ENCODE measurements at regions of chr7 and their contacts with region 1.

Region 1: DNA sequence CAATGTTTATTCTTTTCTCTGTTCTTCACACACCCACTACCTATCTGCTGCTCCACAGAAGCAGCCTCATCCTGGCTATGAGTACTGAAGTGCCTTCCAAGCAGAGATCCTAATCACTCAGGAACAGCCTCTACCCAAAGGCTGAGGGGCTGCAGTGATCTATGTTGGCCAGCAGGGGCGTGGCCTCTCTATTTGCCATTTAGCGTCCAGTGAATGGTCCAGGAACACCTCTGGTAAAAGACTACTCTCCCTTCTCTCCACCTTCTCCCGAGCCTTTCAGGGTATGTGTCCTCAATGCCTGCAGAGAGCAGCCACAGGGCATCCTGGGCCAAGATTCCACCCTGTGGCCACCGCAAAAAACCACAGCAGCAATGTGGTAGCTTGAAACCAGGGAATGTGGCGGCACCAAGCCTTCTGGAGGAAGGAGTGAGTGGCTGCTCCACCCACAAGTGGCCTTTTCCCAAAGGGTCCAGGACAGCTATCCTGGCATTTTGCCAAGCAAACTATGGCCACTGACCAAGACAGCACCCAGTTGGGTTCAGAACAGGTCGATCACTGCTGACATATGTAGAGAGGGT is 70.9 kb downstream of the SYPL1 start:
- DNase-seq: peak; percentile 35
- H3K4me3 ChIP-seq: no peak overlapping the region
- H3K27ac ChIP-seq: no peak overlapping the region
- H3K4me1 ChIP-seq: no peaks in the 10 kb centered on the region
- H3K27me3 ChIP-seq: peaks cover 4 to 8% of the 10 kb centered on the region in 2 experiments
- CTCF ChIP-seq: peak; percentile 79 to 89
- POLR2A ChIP-seq: no peak

Region 2: GRCh38 chr7:105399043-105399725 is 642.0 kb before region 1 on chr7:
- CTCF ChIA-PET with region 1: no interaction called
- POLR2A ChIA-PET with region 1: no interaction called
- dilution Hi-C with region 1: no loop called
- intact Hi-C with region 1: loop called (anchors 10 kb)
- DNase-seq: peak; percentile 75
- H3K4me3 ChIP-seq: no peak overlapping the region
- H3K27ac ChIP-seq: no peak overlapping the region
- H3K4me1 ChIP-seq: peaks cover 12% of the 10 kb centered on the region
- H3K27me3 ChIP-seq: no peaks in the 10 kb centered on the region
- CTCF ChIP-seq: peak in 1 of 2 donors; percentile 29
- POLR2A ChIP-seq: no peak

Region 3: DNA sequence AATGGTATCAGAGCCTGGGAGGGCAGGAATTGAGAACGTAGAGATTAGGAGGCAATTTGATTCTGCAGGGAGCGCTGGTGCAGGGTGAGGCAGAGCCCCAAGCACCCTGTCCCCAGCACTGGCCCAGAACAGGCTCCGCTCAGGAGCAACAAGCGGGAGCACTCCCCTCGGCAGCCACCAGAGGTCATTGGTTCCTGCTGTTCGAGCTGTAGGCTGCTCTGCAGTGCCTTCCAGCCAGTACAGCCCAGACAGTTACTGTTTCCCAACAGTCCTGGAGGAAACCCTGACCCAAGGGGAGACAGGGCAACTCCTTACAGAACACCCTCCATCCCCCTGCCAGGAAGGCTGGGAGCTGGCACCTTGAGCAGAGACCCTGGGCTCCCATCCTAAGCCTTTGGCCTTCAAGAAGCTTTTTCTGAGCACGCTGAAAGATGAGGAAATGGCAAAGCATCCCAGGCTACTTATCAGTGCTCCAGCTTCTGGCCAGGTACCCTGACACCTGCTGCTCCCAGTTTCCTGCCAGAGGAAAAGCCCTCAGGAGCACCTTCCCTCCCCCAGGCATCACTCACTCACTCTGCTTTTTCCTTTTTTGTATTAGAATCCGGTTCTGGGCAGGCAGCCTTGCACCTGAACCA is 388.8 kb before region 1 on chr7:
- CTCF ChIA-PET with region 1: interaction called, 72 read pairs
- POLR2A ChIA-PET with region 1: no interaction called
- dilution Hi-C with region 1: no loop called
- intact Hi-C with region 1: loop called (anchors 1 kb)
- DNase-seq: peak; percentile 67
- H3K4me3 ChIP-seq: no peak overlapping the region
- H3K27ac ChIP-seq: no peak overlapping the region
- H3K4me1 ChIP-seq: no peaks in the 10 kb centered on the region
- H3K27me3 ChIP-seq: no peaks in the 10 kb centered on the region
- CTCF ChIP-seq: peak; percentile 74 to 91
- POLR2A ChIP-seq: no peak

Region 4: DNA sequence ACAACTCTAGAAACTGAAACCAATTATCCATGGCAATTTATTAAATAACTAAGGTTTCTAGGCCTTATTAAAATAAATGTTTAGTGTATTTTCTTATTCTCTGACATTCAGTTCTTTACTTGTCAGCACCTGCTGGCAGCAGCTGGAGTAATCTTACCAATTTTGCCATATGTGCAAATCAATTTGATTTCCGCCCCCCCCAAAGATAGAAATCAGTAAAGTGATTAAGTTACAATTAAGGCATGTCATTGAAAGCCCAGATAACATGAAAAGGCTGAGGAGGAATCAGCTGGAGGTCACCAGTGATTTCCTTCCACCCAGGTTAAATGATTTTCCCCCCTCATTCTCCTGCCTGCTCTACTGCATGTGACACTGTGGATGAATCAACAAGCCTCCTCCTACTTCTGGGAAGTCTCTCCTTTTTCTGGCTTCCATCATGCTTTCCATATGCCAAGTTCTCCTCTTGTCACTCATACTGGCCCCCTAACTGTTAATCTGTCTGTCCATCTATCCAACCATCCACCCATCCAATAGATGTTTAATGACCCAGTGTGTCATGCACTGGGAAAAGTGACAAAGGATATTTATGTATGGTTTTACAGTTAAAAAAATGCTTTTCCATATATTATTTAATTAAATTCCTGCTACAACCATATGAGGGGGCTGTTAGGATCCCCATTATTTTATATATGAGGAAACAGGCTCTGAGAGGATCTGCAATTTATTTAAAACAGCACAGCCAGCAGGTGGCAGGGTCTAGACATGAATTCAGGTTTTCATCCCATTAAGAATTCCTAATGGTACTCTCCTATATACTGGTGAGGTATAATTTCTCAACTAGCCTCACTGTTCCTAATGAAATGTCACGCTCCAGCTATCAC is 281.3 kb before region 1 on chr7:
- CTCF ChIA-PET with region 1: interaction called, 55 read pairs
- POLR2A ChIA-PET with region 1: no interaction called
- dilution Hi-C with region 1: no loop called
- intact Hi-C with region 1: loop called (anchors 1 kb)
- DNase-seq: peak; percentile 64
- H3K4me3 ChIP-seq: no peak overlapping the region
- H3K27ac ChIP-seq: no peak overlapping the region
- H3K4me1 ChIP-seq: no peaks in the 10 kb centered on the region
- H3K27me3 ChIP-seq: no peaks in the 10 kb centered on the region
- CTCF ChIP-seq: peak; percentile 33 to 43
- POLR2A ChIP-seq: no peak

Region 5: DNA sequence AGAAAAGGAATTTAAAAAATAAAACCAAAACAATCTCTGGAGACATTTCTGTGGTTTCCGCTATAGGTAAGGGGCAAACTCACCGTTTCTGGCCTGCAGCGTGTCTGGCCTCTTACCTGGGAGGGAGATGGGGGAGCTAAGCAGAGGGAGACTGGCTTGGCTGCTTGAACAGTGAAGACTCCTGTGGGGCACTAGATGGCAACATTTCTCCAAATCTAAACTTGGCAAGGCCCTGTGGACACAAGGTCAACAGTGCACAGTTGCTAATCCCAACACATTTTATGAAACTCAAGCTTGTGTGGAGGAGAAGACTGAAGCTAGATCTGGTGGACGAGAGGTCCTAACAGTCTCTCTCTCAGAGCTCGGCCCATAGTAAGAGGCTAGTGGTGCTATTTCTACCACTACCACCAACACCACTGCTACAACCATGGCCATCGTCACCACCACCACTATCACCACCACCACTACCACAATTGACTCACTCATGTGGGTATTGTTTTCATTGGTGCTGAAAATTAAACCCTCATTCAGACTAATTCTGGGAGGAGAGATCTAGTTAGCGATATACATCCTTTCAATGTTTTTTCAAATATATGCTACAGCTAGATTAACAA is 106.5 kb before region 1 on chr7:
- CTCF ChIA-PET with region 1: interaction called, 11 read pairs
- POLR2A ChIA-PET with region 1: no interaction called
- dilution Hi-C with region 1: no loop called
- intact Hi-C with region 1: no loop called
- DNase-seq: no peak
- H3K4me3 ChIP-seq: no peak overlapping the region
- H3K27ac ChIP-seq: no peak overlapping the region
- H3K4me1 ChIP-seq: no peaks in the 10 kb centered on the region
- H3K27me3 ChIP-seq: peaks cover 0 to 10% of the 10 kb centered on the region in 2 experiments
- CTCF ChIP-seq: no peak
- POLR2A ChIP-seq: no peak